ENCODE measurements at regions of chr18 and their contacts with region 1.

Region 1: GRCh38 chr18:2981212-2981728 is 31.7 kb downstream of the LPIN2 start:
- DNase-seq: no peak

Region 2: DNA sequence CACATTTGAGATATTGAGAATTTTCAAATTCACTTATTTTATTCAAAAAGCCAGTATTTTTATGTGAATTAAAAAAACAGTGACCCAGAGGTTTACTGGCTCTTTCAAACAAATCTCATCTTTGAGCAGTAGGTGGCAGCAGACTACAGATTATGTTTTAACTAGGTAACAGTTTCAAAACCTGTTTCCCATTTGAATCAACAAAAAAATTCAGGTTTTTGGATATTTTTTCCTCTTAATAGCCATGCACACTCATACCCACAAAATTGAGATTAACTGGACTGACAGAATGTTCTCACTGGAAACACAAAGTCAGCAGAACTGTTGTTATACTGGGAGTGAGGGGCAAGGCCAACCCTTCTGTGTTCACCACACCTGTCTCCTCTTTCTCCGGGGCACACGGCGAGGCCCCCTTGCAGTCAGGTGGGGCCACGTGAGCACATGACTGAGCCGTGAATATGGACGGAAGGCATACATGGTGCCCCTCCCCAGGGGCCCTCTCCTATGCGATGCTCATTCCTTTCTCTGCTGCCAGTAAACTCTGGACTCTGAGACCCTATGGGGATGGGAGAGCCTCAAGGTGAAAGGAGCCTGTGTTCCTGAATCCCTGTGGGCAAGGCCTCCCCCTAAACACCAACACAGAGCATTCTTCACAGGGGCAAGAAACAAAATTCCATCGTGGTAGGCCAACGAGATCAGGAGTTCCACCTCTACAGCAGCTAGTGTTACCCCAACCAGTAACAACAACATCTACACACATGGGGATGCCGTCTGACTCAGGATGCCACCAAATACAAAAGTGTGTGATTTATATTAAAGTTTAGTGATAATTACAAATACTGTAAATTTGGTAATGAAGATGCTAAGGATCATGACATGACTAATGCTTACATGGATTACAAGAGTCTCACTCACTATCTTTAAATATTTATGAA is 48.8 kb before region 1 on chr18:
- intact Hi-C with region 1: no loop called
- DNase-seq: peak; percentile 45

Region 3: GRCh38 chr18:2948038-2948437 is 33.2 kb before region 1 on chr18:
- intact Hi-C with region 1: loop called in 1 of 2 experiments (anchors 5 kb)
- DNase-seq: no peak